ENCODE measurements at regions of chr13 and their contacts with region 1.

Region 1: GRCh38 chr13:30371649-30372265 is 50.5 kb upstream of the UBE2L5 start:
- DNase-seq: peak; percentile 81
- ATAC-seq: peak; percentile 67
- H3K4me3 Mint-ChIP-seq: peak overlapping the region; percentile 59
- H3K27ac Mint-ChIP-seq: peak overlapping the region; percentile 69
- H3K4me1 Mint-ChIP-seq: peaks cover 75% of the 10 kb centered on the region
- H3K27me3 Mint-ChIP-seq: no peaks in the 10 kb centered on the region

Region 2: DNA sequence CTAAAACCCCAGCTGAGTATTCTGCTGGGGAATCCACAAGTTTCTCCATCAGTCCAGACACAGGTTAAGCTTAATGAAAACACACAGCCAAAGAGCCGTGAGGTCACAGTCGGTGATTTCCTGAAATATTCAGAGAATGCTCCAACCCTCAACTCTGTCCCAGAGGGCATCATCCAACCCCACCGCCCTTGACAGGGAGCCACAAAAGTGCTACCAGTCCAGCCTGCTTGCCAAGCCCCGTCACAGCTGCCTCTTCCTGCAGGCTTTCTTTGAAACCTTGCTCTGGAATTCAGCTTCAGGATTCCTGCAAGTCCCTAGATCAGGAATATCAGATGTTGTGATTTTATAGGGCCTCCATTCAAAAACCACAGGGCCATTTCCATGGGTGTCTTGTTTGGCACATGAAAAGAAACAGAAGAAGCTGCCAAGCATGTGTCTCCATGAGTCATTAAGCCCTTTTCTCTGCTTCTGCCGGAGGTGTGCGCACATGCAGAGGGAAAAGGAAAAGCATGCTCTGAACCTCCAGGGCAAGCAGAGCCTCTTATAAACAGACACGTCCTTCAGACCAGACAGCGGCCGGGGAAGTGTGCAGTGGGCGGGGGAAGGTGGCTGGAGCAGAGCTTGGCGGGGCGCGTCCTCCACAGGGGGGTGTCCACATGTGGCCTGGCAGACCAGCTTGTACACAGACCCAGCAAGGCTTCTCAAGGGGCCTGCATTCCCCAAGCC is 229.1 kb before region 1 on chr13:
- CTCF ChIA-PET with region 1: interaction called, 6 read pairs
- POLR2A ChIA-PET with region 1: no interaction called
- intact Hi-C with region 1: loop called in 1 of 2 experiments (anchors 1 kb)
- DNase-seq: peak; percentile 66
- ATAC-seq: peak; percentile 49
- H3K4me3 Mint-ChIP-seq: no peak overlapping the region
- H3K27ac Mint-ChIP-seq: peak overlapping the region; percentile 84
- H3K4me1 Mint-ChIP-seq: peaks cover 62% of the 10 kb centered on the region
- H3K27me3 Mint-ChIP-seq: no peaks in the 10 kb centered on the region

Region 3: DNA sequence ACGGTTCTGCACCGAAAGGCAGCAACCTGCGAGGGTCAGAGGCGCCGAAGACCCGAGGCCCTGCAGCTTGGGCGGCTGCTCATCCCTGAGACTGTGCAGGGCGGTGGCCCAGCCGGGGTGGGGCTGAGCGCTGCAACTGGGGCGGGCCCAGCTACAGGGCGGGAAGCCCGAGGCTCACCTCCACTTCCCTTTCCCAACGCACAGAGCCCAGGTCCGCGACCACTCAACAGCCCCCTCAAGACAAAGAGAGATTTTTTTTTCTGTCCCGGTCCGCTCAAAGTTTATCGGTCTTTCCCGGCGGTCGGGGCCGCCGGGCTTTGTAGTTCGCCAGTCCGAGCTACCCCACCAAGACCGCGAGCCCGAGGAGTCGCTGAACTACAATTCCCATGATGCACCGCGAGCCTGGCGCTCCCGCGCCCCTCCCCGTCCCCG is 65.0 kb before region 1 on chr13:
- CTCF ChIA-PET with region 1: interaction called, 3 read pairs
- POLR2A ChIA-PET with region 1: no interaction called
- intact Hi-C with region 1: loop called (anchors 2 to 5 kb)
- DNase-seq: peak; percentile 95
- ATAC-seq: peak; percentile 91
- H3K4me3 Mint-ChIP-seq: peak overlapping the region; percentile 80
- H3K27ac Mint-ChIP-seq: peak overlapping the region; percentile 79
- H3K4me1 Mint-ChIP-seq: peaks cover 31% of the 10 kb centered on the region
- H3K27me3 Mint-ChIP-seq: no peaks in the 10 kb centered on the region

Region 4: DNA sequence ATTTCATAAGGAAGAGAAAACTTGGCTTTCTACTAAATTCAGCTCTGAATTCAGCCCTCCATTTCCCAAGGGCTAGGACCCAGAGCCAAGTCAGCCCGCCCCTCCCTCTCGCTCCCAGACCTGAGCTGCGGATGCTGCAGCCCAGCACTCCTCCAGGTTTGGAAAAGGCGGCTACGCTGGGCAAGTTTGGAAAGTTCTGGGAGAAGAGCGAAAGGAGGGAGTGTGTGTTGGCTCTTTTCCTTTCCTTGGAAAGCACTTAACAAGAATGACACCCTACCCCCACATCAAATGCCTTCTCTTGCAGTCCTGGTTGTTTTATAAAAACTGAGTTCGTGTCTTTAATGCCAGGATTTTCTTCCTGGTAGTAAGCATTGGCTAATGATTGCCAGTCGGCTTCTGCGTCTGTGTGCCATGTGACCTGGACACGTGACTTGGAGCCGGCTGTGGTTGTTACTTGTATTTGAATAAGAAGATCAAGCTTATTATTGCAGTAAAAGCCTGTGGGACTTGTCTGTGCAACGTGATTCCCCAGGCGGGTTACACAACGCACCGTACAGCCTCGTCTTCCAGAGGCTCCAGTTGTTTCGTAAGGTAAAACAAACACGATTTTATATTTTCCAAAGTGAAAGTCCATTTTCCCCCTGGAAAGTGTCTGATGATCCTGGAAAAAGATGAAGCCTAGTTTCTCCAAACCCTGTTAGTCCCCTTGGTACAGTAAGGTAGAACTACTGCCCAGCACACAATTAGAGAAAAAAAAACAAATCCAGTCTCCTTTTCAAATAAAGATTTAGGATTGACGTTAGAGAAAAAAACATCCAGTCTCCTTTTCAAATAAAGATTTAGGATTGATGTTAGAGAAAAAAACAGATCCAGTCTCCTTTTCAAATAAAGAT is 23.7 kb after region 1 on chr13:
- CTCF ChIA-PET with region 1: interaction called, 6 read pairs
- POLR2A ChIA-PET with region 1: no interaction called
- intact Hi-C with region 1: loop called (anchors 1 to 2 kb)
- DNase-seq: peak; percentile 85
- ATAC-seq: peak; percentile 68
- H3K4me3 Mint-ChIP-seq: peak overlapping the region; percentile 82
- H3K27ac Mint-ChIP-seq: peak overlapping the region; percentile 96
- H3K4me1 Mint-ChIP-seq: peaks cover 26% of the 10 kb centered on the region
- H3K27me3 Mint-ChIP-seq: no peaks in the 10 kb centered on the region

Region 5: DNA sequence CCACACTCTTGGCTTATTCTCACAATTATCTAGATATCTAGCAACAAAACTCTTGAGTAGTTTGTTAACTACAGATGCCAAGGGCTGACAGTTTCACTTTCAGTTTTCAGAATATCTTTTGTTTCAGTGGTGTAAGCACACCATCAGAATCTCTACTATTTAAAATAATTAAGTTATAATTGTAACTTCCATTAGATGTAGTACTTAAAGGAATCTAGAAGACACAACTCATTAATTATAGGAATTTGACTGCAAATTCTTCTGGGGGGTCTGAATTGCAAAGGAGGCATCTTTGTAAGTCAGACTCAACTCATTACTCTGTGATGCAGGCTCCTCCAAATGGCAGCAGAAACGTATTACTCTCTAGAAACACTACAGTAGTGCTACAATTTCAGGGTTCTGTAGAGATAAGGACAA is 201.1 kb after region 1 on chr13:
- CTCF ChIA-PET with region 1: no interaction called
- POLR2A ChIA-PET with region 1: no interaction called
- intact Hi-C with region 1: loop called in 1 of 2 experiments (anchors 10 kb)
- DNase-seq: peak; percentile 27
- ATAC-seq: peak; percentile 54
- H3K4me3 Mint-ChIP-seq: peak overlapping the region; percentile 55
- H3K27ac Mint-ChIP-seq: peak overlapping the region; percentile 72
- H3K4me1 Mint-ChIP-seq: peaks cover 40% of the 10 kb centered on the region
- H3K27me3 Mint-ChIP-seq: no peaks in the 10 kb centered on the region